ENCODE measurements at regions of chr3 and their contacts with region 1.

Region 1: GRCh38 chr3:112333002-112333380 is at the start of gene CD200:
- DNase-seq: peak; percentile 78
- ATAC-seq: peak; percentile 70
- H3K4me3 Mint-ChIP-seq: peak within 1 kb of the TSS; percentile 84
- H3K27ac Mint-ChIP-seq: peak within 1 kb of the TSS; percentile 93
- H3K4me1 Mint-ChIP-seq: peaks cover 33% of the 10 kb centered on the region
- H3K27me3 Mint-ChIP-seq: no peaks in the 10 kb centered on the region
- total RNA-seq, gene CD200: 30.2 to 42.3 TPM

Region 2: DNA sequence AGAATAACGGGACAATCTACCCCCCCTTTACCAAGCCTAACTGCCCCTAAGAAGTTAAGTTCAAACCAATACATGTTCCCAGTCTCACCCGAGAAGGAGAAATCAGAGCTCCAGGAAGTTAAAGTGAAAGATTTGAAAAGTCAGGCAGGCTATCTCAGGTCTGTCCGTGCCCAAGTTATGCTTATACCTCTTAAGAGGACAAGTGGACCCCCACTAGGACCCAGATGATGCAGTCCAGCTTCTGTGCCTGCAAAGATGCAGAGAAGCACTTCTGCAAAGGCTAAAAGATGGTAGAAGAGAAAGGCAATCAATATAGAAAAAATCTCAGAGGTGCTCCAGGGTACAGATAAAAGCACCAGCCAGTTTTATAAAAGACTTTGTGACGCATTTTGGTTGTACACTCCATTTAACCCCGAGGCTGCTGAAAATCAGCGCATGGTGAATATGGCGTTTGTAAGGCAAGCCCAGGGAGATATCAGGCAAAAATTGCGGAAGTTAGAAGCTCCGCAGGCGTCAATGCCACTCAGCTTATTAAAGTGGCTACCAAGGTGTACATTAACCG is 29.1 kb before region 1 on chr3:
- CTCF ChIA-PET with region 1: interaction called, 17 read pairs
- POLR2A ChIA-PET with region 1: no interaction called
- intact Hi-C with region 1: no loop called
- DNase-seq: no peak
- ATAC-seq: peak; percentile 45
- H3K4me3 Mint-ChIP-seq: no peak overlapping the region
- H3K27ac Mint-ChIP-seq: no peak overlapping the region
- H3K4me1 Mint-ChIP-seq: no peaks in the 10 kb centered on the region
- H3K27me3 Mint-ChIP-seq: no peaks in the 10 kb centered on the region

Region 3: DNA sequence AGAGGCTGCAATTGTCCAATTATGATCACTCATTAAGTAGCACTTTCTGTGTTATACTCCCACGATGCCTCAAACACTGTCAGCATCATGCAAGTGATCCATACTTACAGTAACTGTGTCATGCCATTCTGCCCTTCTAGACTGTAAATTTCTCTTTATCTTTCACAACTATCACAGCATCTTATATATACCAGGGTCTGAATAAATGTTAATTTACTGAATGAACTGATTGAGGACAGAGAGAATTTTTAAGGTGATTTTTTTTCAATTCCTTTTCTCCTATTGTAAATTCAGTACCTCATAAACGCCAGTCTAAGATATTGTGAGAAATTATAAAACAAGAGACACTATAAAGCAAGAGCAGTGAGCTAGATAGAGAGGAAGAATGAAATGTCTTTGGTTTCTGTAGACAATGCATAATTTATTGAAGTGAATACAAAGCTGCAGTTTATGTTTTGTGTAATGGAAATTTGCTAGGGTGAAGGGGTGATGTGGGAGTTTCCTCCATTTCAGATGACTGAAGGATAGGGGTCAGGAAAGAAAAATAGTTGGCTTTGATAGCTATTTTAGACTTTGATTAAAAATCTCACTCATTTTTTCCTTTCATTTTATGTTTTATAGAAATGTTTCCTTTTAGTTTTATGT is 17.3 kb after region 1 on chr3:
- CTCF ChIA-PET with region 1: interaction called, 11 read pairs
- POLR2A ChIA-PET with region 1: interaction called, 4 read pairs
- intact Hi-C with region 1: no loop called
- DNase-seq: no peak
- ATAC-seq: no peak
- H3K4me3 Mint-ChIP-seq: no peak overlapping the region
- H3K27ac Mint-ChIP-seq: peak overlapping the region; percentile 34
- H3K4me1 Mint-ChIP-seq: peaks cover 49% of the 10 kb centered on the region
- H3K27me3 Mint-ChIP-seq: no peaks in the 10 kb centered on the region

Region 4: DNA sequence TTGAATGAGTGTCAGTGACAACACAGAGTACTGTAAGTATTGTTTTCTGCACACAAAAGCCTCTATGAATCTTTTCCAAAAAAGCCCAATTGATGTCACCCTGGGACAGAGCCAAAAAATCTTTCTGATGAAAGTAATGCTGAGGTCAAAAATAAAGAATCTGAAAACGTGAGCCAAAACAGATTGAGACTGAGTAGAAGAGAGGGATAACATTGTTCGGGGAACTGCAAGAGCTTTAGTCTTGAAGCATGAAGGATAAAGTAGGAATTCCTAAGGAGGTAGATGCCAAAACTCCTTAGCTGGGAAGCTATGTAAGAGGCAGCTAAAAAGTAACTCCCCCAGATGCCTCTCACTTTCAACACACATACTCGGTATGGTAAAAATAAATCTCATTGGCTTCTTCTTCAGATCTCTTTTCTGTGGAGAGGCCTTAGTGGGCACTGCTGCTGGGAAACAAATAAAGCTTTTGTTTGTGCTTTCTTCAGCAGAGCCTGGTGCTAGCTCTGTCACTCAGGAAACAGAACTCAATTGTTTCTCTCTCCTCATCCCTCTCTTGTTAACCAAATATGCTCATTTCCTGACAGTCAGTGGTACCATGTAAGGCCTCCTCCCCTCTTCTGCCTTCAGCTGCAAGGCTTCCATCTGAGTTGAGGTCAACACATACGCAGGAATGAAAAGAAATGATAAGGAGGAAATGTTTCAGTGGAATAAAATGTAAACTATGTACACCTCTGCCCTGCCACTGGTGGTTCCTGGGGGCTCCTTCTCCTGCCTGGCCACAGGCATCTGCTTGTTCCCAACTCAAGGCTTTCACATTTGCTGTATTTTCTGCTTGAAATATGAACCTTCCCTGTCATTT is 58.0 kb after region 1 on chr3:
- CTCF ChIA-PET with region 1: interaction called, 7 read pairs
- POLR2A ChIA-PET with region 1: interaction called, 4 read pairs
- intact Hi-C with region 1: loop called in 1 of 2 experiments (anchors 5 kb)
- DNase-seq: no peak
- ATAC-seq: peak; percentile 73
- H3K4me3 Mint-ChIP-seq: no peak overlapping the region
- H3K27ac Mint-ChIP-seq: peak overlapping the region; percentile 70
- H3K4me1 Mint-ChIP-seq: peaks cover 53% of the 10 kb centered on the region
- H3K27me3 Mint-ChIP-seq: no peaks in the 10 kb centered on the region

Region 5: DNA sequence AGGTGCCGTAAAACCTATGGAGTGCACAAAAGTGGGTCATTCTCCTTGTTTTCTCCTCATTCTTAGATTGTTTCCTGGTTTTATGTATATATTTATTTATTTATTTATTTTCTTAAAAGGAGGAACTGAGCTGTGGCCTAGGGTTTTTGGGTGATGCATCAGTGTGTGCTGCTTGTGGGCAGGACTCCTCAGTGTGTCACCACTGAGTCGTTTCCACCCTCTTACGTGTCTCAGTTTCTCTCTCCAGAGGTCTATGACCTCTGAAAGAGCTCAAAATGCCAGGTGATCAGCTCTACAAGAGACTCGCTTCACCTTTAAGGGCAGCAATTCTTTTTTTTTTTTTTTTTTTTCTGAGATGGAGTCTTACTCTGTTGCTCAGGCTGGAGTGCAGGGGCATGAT is 72.9 kb after region 1 on chr3:
- CTCF ChIA-PET with region 1: interaction called, 10 read pairs
- POLR2A ChIA-PET with region 1: no interaction called
- intact Hi-C with region 1: no loop called
- DNase-seq: peak; percentile 72
- ATAC-seq: peak; percentile 90
- H3K4me3 Mint-ChIP-seq: no peak overlapping the region
- H3K27ac Mint-ChIP-seq: no peak overlapping the region
- H3K4me1 Mint-ChIP-seq: peaks cover 28% of the 10 kb centered on the region
- H3K27me3 Mint-ChIP-seq: no peaks in the 10 kb centered on the region

Region 6: GRCh38 chr3:112437146-112438022 is 104.4 kb after region 1 on chr3:
- CTCF ChIA-PET with region 1: interaction called, 24 read pairs
- POLR2A ChIA-PET with region 1: interaction called, 3 read pairs
- intact Hi-C with region 1: no loop called
- DNase-seq: peak; percentile 22
- ATAC-seq: peak; percentile 92
- H3K4me3 Mint-ChIP-seq: no peak overlapping the region
- H3K27ac Mint-ChIP-seq: peak overlapping the region; percentile 64
- H3K4me1 Mint-ChIP-seq: peaks cover 39% of the 10 kb centered on the region
- H3K27me3 Mint-ChIP-seq: no peaks in the 10 kb centered on the region

Region 7: DNA sequence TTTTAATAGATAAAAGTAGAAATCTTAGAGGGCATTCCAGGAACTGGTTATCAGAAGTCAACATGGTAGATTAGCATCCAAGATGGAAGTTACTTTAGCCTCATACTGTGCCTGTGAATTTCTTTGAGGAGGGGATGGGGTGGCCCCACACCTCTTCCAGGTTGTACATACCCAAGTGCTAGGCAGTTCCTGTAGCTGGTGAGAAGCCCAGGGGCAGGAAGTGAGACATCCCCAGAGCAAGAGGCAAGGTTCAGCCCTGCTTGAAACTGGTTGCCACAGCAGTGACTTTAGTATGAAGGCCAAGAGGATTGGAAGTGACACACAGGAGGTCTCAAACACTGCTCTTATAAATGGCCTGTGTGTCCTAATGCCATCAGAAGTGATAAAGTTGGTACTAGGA is 669.7 kb after region 1 on chr3:
- CTCF ChIA-PET with region 1: no interaction called
- POLR2A ChIA-PET with region 1: no interaction called
- intact Hi-C with region 1: loop called in 1 of 2 experiments (anchors 10 kb)
- DNase-seq: peak; percentile 77
- ATAC-seq: peak; percentile 77
- H3K4me3 Mint-ChIP-seq: no peak overlapping the region
- H3K27ac Mint-ChIP-seq: peak overlapping the region; percentile 89
- H3K4me1 Mint-ChIP-seq: peaks cover 83% of the 10 kb centered on the region
- H3K27me3 Mint-ChIP-seq: no peaks in the 10 kb centered on the region

Measured in activated CD4-positive, alpha-beta T cell treated with anti-CD3 and anti-CD28 coated beads for 36 hours (primary cell).